Dorsolateral prefrontal cortex (tissue), 120 donors: ENCODE measurements at regions of chr15 and their contacts with region 1.

Region 1: GRCh38 chr15:93302080-93302765 is 213.2 kb upstream of the RGMA start:
- DNase-seq: peak; percentile 12 to 81 (median 70)
- H3K4me3 ChIP-seq: peak overlapping the region in 3 of 59 donors; percentile 5 to 40 (median 16)
- H3K27ac ChIP-seq: peak overlapping the region in 21 of 59 donors; percentile 2 to 75 (median 46)
- H3K27me3 ChIP-seq: no peaks in the 10 kb centered on the region
- CTCF ChIP-seq: no peak

Region 2: DNA sequence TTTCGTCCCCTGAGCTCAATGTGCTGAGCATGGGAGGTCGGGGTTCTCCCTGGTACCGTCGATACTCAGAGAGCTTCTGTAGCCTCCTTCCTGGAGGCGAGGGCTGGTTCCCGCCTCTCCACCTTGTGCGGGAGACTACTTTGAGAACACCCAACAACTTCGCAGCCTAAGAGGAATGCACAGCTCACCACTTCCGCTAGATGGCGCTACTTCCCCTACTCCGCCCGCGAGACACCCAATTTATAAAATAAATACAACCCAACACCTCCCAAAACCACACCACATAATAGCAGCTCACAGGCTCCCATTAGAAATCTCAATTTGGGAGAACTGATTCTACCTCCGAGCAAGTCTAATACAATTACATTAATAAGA is 214.4 kb before region 1 on chr15:
- intact Hi-C with region 1: loop called in 1 of 2 experiments (anchors 5 kb)
- DNase-seq: peak in 9 of 10 donors; percentile 45 to 82 (median 76)
- H3K4me3 ChIP-seq: peak overlapping the region; percentile 43 to 77 (median 60)
- H3K27ac ChIP-seq: peak overlapping the region in 44 of 59 donors; percentile 0 to 87 (median 78)
- H3K27me3 ChIP-seq: peaks cover 0 to 69% (median 17%) of the 10 kb centered on the region in 45 donors
- CTCF ChIP-seq: peak; percentile 79 to 97 (median 91)

Region 3: GRCh38 chr15:93164409-93164808 is 137.8 kb before region 1 on chr15:
- intact Hi-C with region 1: no loop called
- DNase-seq: no peak
- H3K4me3 ChIP-seq: no peak overlapping the region
- H3K27ac ChIP-seq: no peak overlapping the region
- H3K27me3 ChIP-seq: peaks cover 0 to 9% (median 0%) of the 10 kb centered on the region in 45 donors
- CTCF ChIP-seq: no peak

Region 4: DNA sequence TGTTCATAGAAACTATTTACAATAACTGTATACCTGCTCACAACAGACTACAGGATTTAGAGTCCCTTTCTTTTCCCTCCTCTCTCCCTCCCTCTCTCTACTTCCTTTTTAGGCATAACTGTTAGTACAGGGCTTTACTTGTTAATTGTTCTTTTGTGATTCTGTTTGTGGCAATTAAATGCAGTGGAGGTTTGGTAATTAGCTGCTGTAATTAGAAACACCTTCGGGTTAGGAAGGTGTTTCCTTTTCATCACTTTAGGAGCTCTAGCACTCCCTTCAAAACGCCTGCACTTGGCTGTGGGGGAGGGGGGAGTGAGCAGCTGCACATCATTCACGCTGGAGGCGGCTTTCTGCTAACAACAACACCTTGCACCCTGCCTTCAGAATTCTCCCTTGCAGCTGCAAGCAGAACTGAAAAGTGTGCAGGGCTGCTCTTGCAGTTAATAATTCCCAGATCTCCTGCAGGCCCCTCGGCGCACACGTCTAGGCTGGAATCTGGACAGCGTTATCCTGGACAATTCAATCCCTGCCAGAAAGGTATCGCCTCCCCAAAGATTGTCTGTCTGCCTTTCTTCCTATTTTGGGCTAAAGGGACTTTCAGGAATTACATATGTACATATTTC is 29.4 kb after region 1 on chr15:
- intact Hi-C with region 1: no loop called
- DNase-seq: peak in 1 of 10 donors; percentile 34
- H3K4me3 ChIP-seq: no peak overlapping the region
- H3K27ac ChIP-seq: no peak overlapping the region
- H3K27me3 ChIP-seq: peaks cover 0 to 34% (median 0%) of the 10 kb centered on the region in 45 donors
- CTCF ChIP-seq: no peak

Region 5: GRCh38 chr15:93523481-93523880 is 221.3 kb after region 1 on chr15:
- intact Hi-C with region 1: no loop called
- DNase-seq: no peak
- H3K4me3 ChIP-seq: no peak overlapping the region
- H3K27ac ChIP-seq: no peak overlapping the region
- H3K27me3 ChIP-seq: peaks cover 0 to 28% (median 0%) of the 10 kb centered on the region in 45 donors
- CTCF ChIP-seq: no peak